Mammary epithelial cell (primary cell): ENCODE measurements at regions of chr22 and their contacts with region 1.

Region 1: DNA sequence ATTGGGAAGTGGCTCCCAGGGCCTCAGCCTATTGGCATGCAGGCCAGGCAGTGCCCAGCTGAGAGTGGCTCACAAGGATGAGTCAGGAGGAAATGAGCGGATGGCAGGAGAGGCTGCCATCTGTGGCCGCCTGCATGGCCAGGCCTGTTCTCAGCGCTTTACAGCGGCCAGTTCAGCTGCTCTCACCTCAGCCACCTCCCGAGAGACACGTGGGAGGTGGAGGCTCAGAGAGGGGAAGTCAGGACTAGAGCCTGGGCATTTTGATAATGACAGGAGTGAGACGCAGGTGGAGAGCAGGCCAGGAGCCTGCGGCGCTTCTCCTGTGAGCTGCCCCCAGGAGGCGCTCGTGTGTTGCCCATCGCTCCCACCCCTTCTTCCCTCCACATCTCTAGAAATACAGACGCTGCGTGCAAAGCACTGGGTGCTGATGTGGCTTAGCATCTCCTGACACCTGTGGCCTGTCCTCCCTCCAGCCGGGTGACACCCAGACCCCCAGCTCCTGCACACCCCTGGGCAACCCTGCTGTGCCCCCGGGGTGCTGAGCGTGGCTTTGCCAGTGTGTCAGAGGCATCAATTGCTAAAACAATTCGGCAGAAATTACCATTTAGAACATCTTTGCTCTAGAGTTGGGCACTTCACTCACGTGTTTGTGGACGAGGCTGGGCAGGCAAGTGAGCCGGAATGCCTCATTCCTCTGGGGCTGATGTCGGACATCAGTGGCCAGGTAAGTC is 21.4 kb upstream of the PANX2 start:
- DNase-seq: peak; percentile 98
- H3K4me3 ChIP-seq: no peak overlapping the region
- H3K27ac ChIP-seq: no peak overlapping the region
- H3K4me1 ChIP-seq: peaks cover 13% of the 10 kb centered on the region
- H3K27me3 ChIP-seq: no peaks in the 10 kb centered on the region
- CTCF ChIP-seq: peak; percentile 93 to 94

Region 2: GRCh38 chr22:49767355-49768062 is 381.6 kb before region 1 on chr22:
- CTCF ChIA-PET with region 1: interaction called, 5 read pairs
- dilution Hi-C with region 1: no loop called
- in situ Hi-C with region 1: no loop called
- intact Hi-C with region 1: loop called (anchors 5 kb)
- DNase-seq: peak; percentile 52
- H3K4me3 ChIP-seq: no peak overlapping the region
- H3K27ac ChIP-seq: no peak overlapping the region
- H3K4me1 ChIP-seq: peaks cover 10% of the 10 kb centered on the region
- H3K27me3 ChIP-seq: no peaks in the 10 kb centered on the region
- CTCF ChIP-seq: peak; percentile 71 to 82

Region 3: DNA sequence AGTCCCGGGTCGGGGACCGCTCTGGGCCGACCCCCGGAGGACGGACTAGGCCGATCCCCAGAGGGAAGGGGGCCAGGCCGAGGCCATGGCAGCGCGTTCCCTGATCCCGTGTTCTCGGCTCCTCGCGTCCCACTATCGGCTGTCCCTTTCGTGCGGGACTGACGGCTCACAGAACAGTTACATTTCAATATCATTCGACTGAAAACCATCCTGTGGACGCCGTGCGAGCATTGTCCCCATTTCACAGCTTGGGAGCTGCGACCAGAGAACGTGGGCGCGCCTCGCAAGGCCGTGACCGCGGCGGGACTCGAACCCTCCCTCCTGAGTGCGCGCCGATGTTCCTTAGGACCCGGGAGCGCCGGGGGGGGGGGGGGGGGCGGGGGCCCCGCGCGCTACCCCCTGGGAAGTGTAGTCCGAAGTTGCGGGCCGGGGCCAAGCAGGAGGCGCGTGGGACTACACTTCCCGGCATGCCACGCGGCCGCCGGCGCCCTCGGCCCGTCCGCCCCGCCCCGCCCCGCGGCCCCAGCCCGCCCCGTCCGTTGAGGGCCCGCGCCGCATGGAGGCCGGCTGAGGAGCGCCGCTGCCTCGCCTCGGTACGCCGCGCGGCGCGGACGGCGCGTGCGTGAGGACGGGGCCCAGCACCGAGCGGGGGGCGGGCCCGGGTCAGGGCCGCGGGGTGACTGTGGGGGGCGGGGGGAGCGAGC is 36.4 kb after region 1 on chr22 and contains the start of gene TRABD:
- CTCF ChIA-PET with region 1: no interaction called
- dilution Hi-C with region 1: loop called (anchors 5 kb)
- in situ Hi-C with region 1: no loop called
- intact Hi-C with region 1: loop called (anchors 1 kb)
- DNase-seq: peak; percentile 81
- H3K4me3 ChIP-seq: peak within 1 kb of the TSS; percentile 75 to 98 (median 75)
- H3K27ac ChIP-seq: peak within 1 kb of the TSS; percentile 40
- H3K4me1 ChIP-seq: peaks cover 38% of the 10 kb centered on the region
- H3K27me3 ChIP-seq: no peaks in the 10 kb centered on the region
- CTCF ChIP-seq: no peak
- total RNA-seq, gene TRABD: 25.8 to 63.5 TPM

Region 4: GRCh38 chr22:50218996-50219727 is 70.0 kb after region 1 on chr22:
- CTCF ChIA-PET with region 1: no interaction called
- dilution Hi-C with region 1: loop called (anchors 5 kb)
- in situ Hi-C with region 1: loop called in 1 of 2 experiments (anchors 5 kb)
- intact Hi-C with region 1: no loop called
- DNase-seq: peak; percentile 42
- H3K4me3 ChIP-seq: no peak overlapping the region
- H3K27ac ChIP-seq: no peak overlapping the region
- H3K4me1 ChIP-seq: no peaks in the 10 kb centered on the region
- H3K27me3 ChIP-seq: no peaks in the 10 kb centered on the region
- CTCF ChIP-seq: no peak

Region 5: DNA sequence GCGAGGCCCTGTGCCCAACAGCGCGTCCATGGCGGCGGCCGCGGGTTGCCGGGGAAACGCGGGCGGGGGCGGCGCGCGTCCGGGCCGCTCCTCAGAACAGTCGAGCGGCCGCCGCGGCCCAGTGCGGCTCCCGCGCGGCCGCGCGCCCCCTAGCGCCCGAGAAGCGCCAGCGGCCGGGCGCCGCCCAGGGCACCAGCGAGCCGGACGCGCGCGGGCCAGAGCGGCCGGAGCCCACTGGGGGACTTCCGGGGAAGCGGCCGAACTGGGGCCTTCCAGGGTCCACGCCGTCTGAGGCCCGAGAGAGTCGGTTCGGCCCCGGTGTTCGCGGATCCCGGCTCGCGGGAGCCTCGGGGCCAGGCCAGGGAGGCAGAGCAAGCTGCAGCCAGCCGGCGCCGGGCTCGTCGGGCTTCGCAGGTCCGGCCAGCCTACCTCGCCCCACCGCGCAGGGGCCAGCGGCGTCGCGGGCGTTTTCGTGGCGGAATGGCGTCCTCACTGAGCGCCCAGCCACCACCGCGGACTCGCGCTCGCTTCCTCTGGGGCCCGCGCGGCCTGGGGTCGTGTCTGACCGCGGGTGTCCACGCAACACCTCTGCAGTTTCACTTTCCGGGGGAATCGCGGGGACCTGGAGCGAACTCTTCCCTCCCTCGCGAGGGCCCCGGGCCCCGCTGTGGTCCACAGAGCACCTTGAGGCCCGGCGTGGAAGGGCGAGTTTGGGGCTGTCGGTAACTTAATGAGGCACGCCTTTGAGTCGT is 178.0 kb after region 1 on chr22 and contains the start of gene DENND6B:
- CTCF ChIA-PET with region 1: no interaction called
- dilution Hi-C with region 1: no loop called
- in situ Hi-C with region 1: no loop called
- intact Hi-C with region 1: loop called (anchors 5 kb)
- DNase-seq: peak; percentile 64
- H3K4me3 ChIP-seq: peak within 1 kb of the TSS; percentile 26 to 80 (median 77)
- H3K27ac ChIP-seq: peak within 1 kb of the TSS; percentile 54
- H3K4me1 ChIP-seq: peaks cover 13% of the 10 kb centered on the region
- H3K27me3 ChIP-seq: no peaks in the 10 kb centered on the region
- CTCF ChIP-seq: peak; percentile 40 to 45
- total RNA-seq, gene DENND6B: 2.0 to 3.4 TPM

Region 6: DNA sequence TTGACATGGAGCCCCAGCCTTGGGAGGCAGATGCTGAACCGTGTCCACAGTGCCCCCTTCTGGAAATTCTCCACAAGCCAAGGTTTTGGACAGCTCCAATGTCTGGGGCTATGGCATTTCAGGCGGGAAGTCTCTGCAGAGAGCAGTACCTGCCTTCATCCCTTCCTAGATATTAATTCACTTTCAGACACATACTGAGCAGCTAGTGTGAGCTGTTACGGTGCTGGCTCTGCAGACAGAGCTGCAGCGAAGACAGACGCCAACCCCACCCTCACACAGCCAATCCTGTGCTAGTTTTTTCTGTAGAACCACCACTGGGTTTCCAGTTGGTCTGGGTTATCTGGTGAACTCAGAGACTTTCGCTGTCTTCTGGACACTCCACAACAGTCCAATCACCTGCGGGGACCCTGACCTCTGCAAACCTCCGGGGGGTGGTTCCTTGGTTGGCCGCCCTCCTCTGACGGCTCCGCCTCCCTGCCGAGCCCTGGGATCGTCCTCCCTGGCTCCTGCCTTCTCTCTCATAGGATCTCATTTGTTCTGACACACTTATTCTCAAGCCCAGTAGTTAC is 349.2 kb after region 1 on chr22:
- CTCF ChIA-PET with region 1: no interaction called
- dilution Hi-C with region 1: no loop called
- in situ Hi-C with region 1: no loop called
- intact Hi-C with region 1: loop called (anchors 2 kb)
- DNase-seq: peak; percentile 66
- H3K4me3 ChIP-seq: no peak overlapping the region
- H3K27ac ChIP-seq: no peak overlapping the region
- H3K4me1 ChIP-seq: no peaks in the 10 kb centered on the region
- H3K27me3 ChIP-seq: no peaks in the 10 kb centered on the region
- CTCF ChIP-seq: peak; percentile 81